ENCODE measurements at regions of chr10 and their contacts with region 1.

Region 1: DNA sequence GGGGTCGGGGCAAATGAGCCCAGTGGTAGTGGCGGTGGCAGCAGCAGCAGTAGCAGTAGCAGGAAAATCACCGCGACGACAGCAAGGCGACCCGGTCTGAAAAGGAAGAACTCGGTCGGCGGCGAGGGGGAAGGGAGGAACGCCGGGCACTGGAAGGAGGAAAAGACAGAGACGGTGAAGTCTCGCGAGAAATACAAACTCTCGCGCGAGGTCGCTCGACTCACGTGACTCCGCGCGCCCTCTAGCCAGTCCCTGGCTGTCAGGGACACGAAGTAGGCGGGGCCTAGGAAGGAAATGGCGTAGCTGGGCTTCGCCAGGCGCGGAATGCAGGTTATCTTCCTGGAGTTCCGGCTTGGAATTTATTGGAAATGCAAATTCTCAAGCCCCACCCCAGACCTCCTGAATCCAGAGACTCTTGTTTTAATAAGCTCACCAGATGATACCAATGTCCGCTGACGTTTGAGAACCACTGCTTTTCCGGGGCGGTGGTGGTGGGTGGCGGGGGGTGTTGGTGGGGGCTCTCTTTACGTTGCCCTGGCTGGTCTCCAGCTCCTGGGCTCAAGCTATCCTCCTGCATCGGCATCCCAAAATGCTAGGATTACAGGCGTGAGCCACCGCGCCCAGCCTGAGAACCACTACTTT is at the start of gene SMNDC1:
- DNase-seq: peak; percentile 99
- H3K4me3 Mint-ChIP-seq: peak within 1 kb of the TSS; percentile 93
- H3K27ac Mint-ChIP-seq: peak within 1 kb of the TSS; percentile 97
- H3K4me1 Mint-ChIP-seq: peaks cover 49% of the 10 kb centered on the region
- H3K27me3 Mint-ChIP-seq: no peaks in the 10 kb centered on the region
- total RNA-seq, gene SMNDC1: 44.1 to 48.3 TPM

Region 2: GRCh38 chr10:110176141-110177030 is 128.5 kb before region 1 on chr10:
- CTCF ChIA-PET with region 1: no interaction called
- POLR2A ChIA-PET with region 1: no interaction called
- intact Hi-C with region 1: no loop called
- DNase-seq: no peak
- H3K4me3 Mint-ChIP-seq: no peak overlapping the region
- H3K27ac Mint-ChIP-seq: no peak overlapping the region
- H3K4me1 Mint-ChIP-seq: peaks cover under 1% of the 10 kb centered on the region
- H3K27me3 Mint-ChIP-seq: peaks cover 30% of the 10 kb centered on the region

Region 3: GRCh38 chr10:110225756-110226542 is 79.0 kb before region 1 on chr10:
- CTCF ChIA-PET with region 1: interaction called, 3 read pairs
- POLR2A ChIA-PET with region 1: no interaction called
- intact Hi-C with region 1: loop called (anchors 1 kb)
- DNase-seq: peak; percentile 92
- H3K4me3 Mint-ChIP-seq: peak overlapping the region; percentile 98
- H3K27ac Mint-ChIP-seq: peak overlapping the region; percentile 96
- H3K4me1 Mint-ChIP-seq: peaks cover 41% of the 10 kb centered on the region
- H3K27me3 Mint-ChIP-seq: no peaks in the 10 kb centered on the region

Region 4: GRCh38 chr10:110547139-110547761 is 242.3 kb after region 1 on chr10:
- CTCF ChIA-PET with region 1: interaction called, 99 read pairs
- POLR2A ChIA-PET with region 1: no interaction called
- intact Hi-C with region 1: loop called (anchors 1 kb)
- DNase-seq: no peak
- H3K4me3 Mint-ChIP-seq: no peak overlapping the region
- H3K27ac Mint-ChIP-seq: no peak overlapping the region
- H3K4me1 Mint-ChIP-seq: peaks cover 10% of the 10 kb centered on the region
- H3K27me3 Mint-ChIP-seq: peaks cover 12% of the 10 kb centered on the region

Region 5: GRCh38 chr10:110567201-110568054 is 262.5 kb after region 1 on chr10 and contains the start of gene SMC3:
- CTCF ChIA-PET with region 1: interaction called, 26 read pairs
- POLR2A ChIA-PET with region 1: interaction called, 4 read pairs
- intact Hi-C with region 1: loop called (anchors 1 kb)
- DNase-seq: peak; percentile 94
- H3K4me3 Mint-ChIP-seq: peak within 1 kb of the TSS; percentile 93
- H3K27ac Mint-ChIP-seq: peak within 1 kb of the TSS; percentile 97
- H3K4me1 Mint-ChIP-seq: peaks cover 43% of the 10 kb centered on the region
- H3K27me3 Mint-ChIP-seq: peaks cover 10% of the 10 kb centered on the region
- total RNA-seq, gene SMC3: 89.5 to 92.2 TPM

Region 6: GRCh38 chr10:110574420-110574819 is 269.5 kb after region 1 on chr10:
- CTCF ChIA-PET with region 1: interaction called, 10 read pairs
- POLR2A ChIA-PET with region 1: no interaction called
- intact Hi-C with region 1: no loop called
- DNase-seq: no peak
- H3K4me3 Mint-ChIP-seq: no peak overlapping the region
- H3K27ac Mint-ChIP-seq: no peak overlapping the region
- H3K4me1 Mint-ChIP-seq: peaks cover 62% of the 10 kb centered on the region
- H3K27me3 Mint-ChIP-seq: no peaks in the 10 kb centered on the region

Region 7: GRCh38 chr10:110600487-110601101 is 295.7 kb after region 1 on chr10:
- CTCF ChIA-PET with region 1: interaction called, 90 read pairs
- POLR2A ChIA-PET with region 1: no interaction called
- intact Hi-C with region 1: loop called (anchors 1 kb)
- DNase-seq: no peak
- H3K4me3 Mint-ChIP-seq: no peak overlapping the region
- H3K27ac Mint-ChIP-seq: peak overlapping the region; percentile 13
- H3K4me1 Mint-ChIP-seq: no peaks in the 10 kb centered on the region
- H3K27me3 Mint-ChIP-seq: no peaks in the 10 kb centered on the region

Region 8: DNA sequence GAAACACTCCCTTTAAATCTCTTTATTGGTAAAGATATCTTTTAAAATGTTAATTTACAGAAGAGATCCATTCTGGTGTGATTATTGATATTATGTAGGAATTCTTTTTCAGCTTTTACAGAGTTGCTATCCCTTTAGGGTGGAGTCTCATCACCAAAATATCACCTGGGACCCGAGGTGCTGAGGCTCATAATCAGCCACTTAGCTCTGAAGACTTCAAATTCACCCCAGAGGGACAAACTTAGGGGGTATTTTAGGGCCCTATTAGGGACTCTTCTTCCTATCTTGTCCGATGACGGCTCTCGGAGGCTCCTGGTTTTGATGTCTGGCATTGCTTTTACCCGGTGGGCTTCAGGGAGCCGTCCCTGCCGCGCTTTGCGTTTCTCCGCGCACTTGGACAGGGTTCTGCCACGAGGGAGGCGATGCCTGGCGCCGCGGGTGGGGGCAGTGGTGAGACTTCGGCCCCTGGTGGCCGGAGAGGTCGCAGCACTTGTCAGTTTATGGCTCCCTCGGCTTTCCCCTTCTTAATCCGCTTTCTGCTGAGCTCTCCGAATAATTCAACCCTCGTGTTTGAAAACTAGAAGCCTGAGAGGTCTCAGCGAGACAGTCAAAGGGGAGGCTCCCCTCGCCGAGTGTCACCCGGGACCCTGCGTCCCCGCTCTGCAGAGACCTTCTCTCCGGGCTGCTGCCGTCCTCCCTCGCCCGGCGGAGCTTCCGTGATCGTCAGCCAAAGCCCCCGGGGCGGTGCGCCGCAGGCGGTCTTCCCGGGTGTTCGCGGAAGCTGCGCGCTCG is 367.1 kb after region 1 on chr10:
- CTCF ChIA-PET with region 1: interaction called, 17 read pairs
- POLR2A ChIA-PET with region 1: no interaction called
- intact Hi-C with region 1: loop called (anchors 5 kb)
- DNase-seq: peak; percentile 81
- H3K4me3 Mint-ChIP-seq: peak overlapping the region; percentile 78
- H3K27ac Mint-ChIP-seq: no peak overlapping the region
- H3K4me1 Mint-ChIP-seq: peaks cover 2% of the 10 kb centered on the region
- H3K27me3 Mint-ChIP-seq: no peaks in the 10 kb centered on the region